ENCODE measurements at regions of chr2 and their contacts with region 1.

Region 1: DNA sequence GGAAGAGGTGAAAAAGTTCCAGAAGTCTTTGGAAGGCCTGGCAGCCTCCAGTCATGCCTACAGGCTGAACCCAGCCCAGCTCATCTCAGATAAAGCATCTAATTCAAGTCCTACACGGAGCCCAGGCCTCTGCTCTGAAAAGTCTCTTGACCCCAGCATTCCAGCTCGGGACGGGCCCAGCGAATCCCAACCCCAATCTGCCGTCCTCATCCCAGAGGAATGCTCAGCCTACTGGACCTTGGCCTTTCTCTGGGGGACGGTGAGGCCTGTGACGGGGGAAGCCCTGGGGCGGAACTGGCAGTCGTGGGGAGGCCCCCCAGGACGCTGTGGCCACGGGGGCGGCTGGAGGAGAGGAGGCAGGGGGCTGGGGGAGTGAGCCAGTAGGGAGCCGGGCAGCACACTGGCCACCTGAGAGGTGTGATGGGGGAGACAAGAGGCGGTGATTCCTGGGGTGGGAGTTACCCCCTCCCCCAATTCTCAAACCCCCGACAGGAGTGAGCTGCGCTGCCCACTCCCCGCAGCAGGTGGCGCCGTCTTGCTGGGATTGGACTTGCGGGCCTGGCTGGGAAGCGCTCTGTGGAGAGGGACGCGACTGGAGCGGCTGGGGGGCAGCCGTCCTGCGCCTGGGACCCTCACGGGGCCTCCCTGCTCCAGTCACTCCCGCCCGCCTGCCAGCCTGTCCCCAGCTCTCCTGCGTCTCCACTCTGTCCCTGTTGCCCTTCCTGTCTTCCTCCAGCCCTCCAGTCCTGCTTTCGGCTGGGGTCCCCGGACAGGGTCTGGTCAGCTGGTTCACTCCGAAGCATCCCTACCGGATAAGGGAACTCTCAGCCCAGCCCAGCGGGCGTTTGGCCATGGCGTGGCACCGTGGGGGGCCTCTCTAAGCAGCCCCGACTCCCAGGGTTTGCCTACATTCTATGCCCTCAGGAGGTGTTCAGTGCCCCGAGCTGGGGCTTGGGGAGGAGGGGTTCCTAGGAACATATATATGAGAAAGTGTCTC is 182.6 kb upstream of the HAAO start:
- DNase-seq: peak; percentile 95 to 98
- H3K4me3 ChIP-seq: peak overlapping the region; percentile 7; the same call in 1 of the 2 replicates
- H3K4me3 Mint-ChIP-seq: peak overlapping the region; percentile 63
- H3K27ac Mint-ChIP-seq: peak overlapping the region; percentile 84
- H3K4me1 ChIP-seq: peaks cover 83% of the 10 kb centered on the region
- H3K4me1 Mint-ChIP-seq: peaks cover 73% of the 10 kb centered on the region
- H3K27me3 ChIP-seq: no peaks in the 10 kb centered on the region
- H3K27me3 Mint-ChIP-seq: no peaks in the 10 kb centered on the region
- CTCF ChIP-seq: peak; percentile 96 to 97

Region 2: DNA sequence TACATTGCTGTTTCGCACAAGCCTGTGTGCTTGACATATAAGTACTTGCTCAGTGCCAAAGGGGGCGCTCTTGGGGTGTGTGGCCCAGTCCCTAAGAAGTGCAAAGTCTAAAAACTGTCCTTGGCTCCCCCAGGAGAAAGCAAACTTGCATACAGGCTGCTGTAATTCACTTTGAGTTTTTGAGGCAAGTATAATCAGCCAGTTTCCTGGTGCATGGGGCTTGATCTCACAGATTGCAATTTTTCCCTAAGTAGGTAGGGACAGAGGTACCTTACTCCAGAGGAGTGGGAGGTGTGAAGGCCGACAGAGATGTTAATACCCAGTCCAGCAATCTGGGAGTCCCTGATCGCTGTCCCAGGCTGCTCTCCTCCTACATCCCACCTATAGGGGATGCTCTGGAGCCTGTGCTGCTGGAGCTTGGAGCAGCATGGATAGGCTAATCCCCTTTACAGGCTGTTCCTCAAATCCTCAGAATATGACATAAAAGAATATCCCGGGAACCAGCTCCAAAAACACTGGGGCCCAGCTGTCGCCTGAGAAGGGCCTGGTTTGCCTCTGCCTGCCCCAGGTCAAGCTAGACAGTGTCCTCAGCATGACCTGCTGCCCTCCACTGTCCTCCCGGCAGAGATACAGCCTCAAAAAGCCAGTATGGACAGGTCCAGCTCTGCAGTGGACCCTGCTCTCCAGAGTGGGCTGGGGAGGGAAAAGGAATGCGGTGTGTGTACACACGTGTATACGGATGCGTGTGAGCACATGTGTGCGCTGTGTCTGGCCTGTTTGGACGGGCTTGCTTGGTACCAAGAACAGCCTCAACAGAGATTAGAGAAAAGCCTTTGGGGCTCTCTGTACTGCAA is 46.1 kb before region 1 on chr2:
- CTCF ChIA-PET with region 1: interaction called, 5 read pairs
- POLR2A ChIA-PET with region 1: interaction called, 4 read pairs
- intact Hi-C with region 1: loop called (anchors 2 kb)
- DNase-seq: peak; percentile 65 to 70
- H3K4me3 ChIP-seq: no peak overlapping the region
- H3K4me3 Mint-ChIP-seq: no peak overlapping the region
- H3K27ac Mint-ChIP-seq: peak overlapping the region; percentile 76
- H3K4me1 ChIP-seq: peaks cover 66% of the 10 kb centered on the region
- H3K4me1 Mint-ChIP-seq: peaks cover 53% of the 10 kb centered on the region
- H3K27me3 ChIP-seq: no peaks in the 10 kb centered on the region
- H3K27me3 Mint-ChIP-seq: no peaks in the 10 kb centered on the region
- CTCF ChIP-seq: peak; percentile 38 to 50

Region 3: DNA sequence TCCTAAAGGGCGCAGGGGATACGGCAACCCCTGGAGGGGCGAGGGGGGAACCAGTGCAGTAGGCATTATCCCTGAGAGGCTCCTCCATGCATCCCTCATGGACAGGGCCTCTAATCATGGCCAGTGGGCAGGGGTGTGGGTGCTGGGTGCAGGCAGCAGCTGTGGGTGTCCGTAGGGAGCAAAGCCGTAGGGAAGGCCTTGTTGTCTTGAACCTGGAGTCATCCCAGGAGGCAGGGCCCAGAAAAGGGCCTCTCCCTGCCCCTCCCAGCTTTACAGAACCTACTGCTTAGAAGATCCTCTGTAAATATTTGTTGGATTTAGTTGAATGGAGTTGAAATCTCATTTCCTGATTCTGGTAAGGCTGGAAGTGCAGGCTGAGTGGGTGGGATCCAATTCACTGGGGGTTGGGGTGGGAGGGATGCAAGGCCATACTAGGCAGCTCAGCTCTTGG is 24.4 kb after region 1 on chr2:
- CTCF ChIA-PET with region 1: interaction called, 7 read pairs
- POLR2A ChIA-PET with region 1: no interaction called
- intact Hi-C with region 1: loop called (anchors 1 kb)
- DNase-seq: peak; percentile 73 to 78
- H3K4me3 ChIP-seq: no peak overlapping the region
- H3K4me3 Mint-ChIP-seq: no peak overlapping the region
- H3K27ac Mint-ChIP-seq: peak overlapping the region; percentile 74
- H3K4me1 ChIP-seq: peaks cover 31% of the 10 kb centered on the region
- H3K4me1 Mint-ChIP-seq: peaks cover 29% of the 10 kb centered on the region
- H3K27me3 ChIP-seq: no peaks in the 10 kb centered on the region
- H3K27me3 Mint-ChIP-seq: no peaks in the 10 kb centered on the region
- CTCF ChIP-seq: no peak

Region 4: DNA sequence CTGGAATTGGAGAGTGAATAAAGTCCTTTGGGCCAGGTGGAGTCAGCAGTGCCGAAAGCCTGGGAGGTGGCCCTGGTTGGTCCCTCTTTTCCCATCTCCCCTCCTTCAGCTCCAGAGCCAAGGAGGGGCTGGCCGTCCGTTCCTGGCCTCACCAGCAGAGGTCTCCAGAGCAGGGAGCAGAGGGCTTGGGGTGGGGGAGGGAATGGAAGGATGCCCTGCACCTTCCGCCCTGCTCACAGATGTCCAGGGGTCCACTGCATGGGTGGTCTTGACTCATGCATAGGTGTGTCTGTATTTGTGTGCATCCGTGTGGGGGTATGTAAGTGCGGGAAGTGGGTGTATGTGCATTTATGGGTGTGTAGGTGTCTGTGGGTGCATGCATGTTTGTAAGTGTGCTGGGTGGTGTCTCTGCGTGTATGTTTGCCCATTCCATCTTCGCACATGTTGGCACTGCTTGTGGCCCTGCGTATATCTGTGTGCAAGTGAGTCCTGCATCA is 49.5 kb after region 1 on chr2:
- CTCF ChIA-PET with region 1: interaction called, 10 read pairs
- POLR2A ChIA-PET with region 1: no interaction called
- intact Hi-C with region 1: loop called (anchors 1 kb)
- DNase-seq: peak; percentile 77 to 82
- H3K4me3 ChIP-seq: no peak overlapping the region
- H3K4me3 Mint-ChIP-seq: no peak overlapping the region
- H3K27ac Mint-ChIP-seq: peak overlapping the region; percentile 36
- H3K4me1 ChIP-seq: peaks cover 38% of the 10 kb centered on the region
- H3K4me1 Mint-ChIP-seq: peaks cover 34% of the 10 kb centered on the region
- H3K27me3 ChIP-seq: no peaks in the 10 kb centered on the region
- H3K27me3 Mint-ChIP-seq: no peaks in the 10 kb centered on the region
- CTCF ChIP-seq: peak; percentile 77 to 92

Region 5: GRCh38 chr2:43161650-43162510 is 186.9 kb after region 1 on chr2:
- CTCF ChIA-PET with region 1: interaction called, 17 read pairs
- POLR2A ChIA-PET with region 1: interaction called, 9 read pairs
- intact Hi-C with region 1: loop called (anchors 1 kb)
- DNase-seq: peak; percentile 94 to 98
- H3K4me3 ChIP-seq: peak overlapping the region; percentile 19
- H3K4me3 Mint-ChIP-seq: peak overlapping the region; percentile 56
- H3K27ac Mint-ChIP-seq: peak overlapping the region; percentile 95
- H3K4me1 ChIP-seq: peaks cover 79% of the 10 kb centered on the region
- H3K4me1 Mint-ChIP-seq: peaks cover 59% of the 10 kb centered on the region
- H3K27me3 ChIP-seq: no peaks in the 10 kb centered on the region
- H3K27me3 Mint-ChIP-seq: no peaks in the 10 kb centered on the region
- CTCF ChIP-seq: peak; percentile 32 to 58

Region 6: GRCh38 chr2:43226558-43226954 is 251.5 kb after region 1 on chr2 and contains the start of gene ZFP36L2:
- CTCF ChIA-PET with region 1: interaction called, 39 read pairs
- POLR2A ChIA-PET with region 1: interaction called, 11 read pairs
- intact Hi-C with region 1: loop called (anchors 1 kb)
- DNase-seq: peak; percentile 97 to 99
- H3K4me3 ChIP-seq: peak within 1 kb of the TSS; percentile 98
- H3K4me3 Mint-ChIP-seq: peak within 1 kb of the TSS; percentile 70
- H3K27ac Mint-ChIP-seq: peak within 1 kb of the TSS; percentile 97
- H3K4me1 ChIP-seq: peaks cover 46% of the 10 kb centered on the region
- H3K4me1 Mint-ChIP-seq: peaks cover 24% of the 10 kb centered on the region
- H3K27me3 ChIP-seq: no peaks in the 10 kb centered on the region
- H3K27me3 Mint-ChIP-seq: no peaks in the 10 kb centered on the region
- CTCF ChIP-seq: peak in 1 of 2 experiments; percentile 10
- total RNA-seq, gene ZFP36L2: 225 and 237 TPM in 2 replicates